ENCODE measurements at regions of chr1 and their contacts with region 1.

Region 1: DNA sequence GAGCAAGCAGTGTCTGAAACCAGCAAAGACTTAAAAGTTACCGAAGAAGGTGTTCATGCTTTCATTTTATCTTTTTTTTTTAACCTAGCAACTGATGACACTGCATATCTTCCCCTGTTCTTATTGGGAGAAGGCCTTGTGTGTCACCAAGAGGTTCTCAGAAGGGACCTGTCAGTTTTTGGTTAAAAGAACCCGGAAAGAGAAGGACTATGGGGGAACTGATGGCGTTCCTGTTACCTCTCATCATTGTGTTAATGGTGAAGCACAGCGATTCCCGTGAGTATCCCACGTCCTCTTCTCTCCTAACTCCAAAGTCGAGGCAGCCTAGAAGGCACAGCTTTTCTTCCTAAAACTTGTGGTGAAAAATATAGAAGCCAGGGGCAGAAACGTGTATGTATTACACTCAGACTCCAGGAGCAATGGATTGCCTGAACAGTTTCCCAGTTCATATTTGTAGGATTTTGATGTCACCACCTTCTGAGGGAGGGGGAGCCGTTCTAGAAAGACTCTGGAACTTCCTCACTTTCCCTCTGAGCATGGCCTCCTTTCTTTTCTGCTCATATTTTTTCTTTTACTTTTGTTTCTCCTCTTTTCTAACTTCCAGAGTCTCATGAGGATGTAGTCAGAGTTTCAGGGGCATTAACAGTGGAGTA is at the start of gene MR1:
- DNase-seq: peak; percentile 72 to 91 (median 87)
- H3K4me3 ChIP-seq: peak within 1 kb of the TSS; percentile 63 to 72
- H3K4me3 Mint-ChIP-seq: peak within 1 kb of the TSS; percentile 93 to 99 (median 98)
- H3K27ac ChIP-seq: peak within 1 kb of the TSS; percentile 92
- H3K27ac Mint-ChIP-seq: peak within 1 kb of the TSS; percentile 95 to 100 (median 99)
- H3K4me1 ChIP-seq: peaks cover 56% of the 10 kb centered on the region
- H3K4me1 Mint-ChIP-seq: peaks cover 47 to 64% (median 54%) of the 10 kb centered on the region in 4 donors
- H3K27me3 ChIP-seq: no peaks in the 10 kb centered on the region
- H3K27me3 Mint-ChIP-seq: no peaks in the 10 kb centered on the region
- total RNA-seq, gene MR1: 31.8 to 33.2 TPM

Region 2: GRCh38 chr1:180881806-180882509 is 152.0 kb before region 1 on chr1:
- CTCF ChIA-PET with region 1: no interaction called
- POLR2A ChIA-PET with region 1: no interaction called
- intact Hi-C with region 1: loop called (anchors 5 kb)
- DNase-seq: peak in 1 of 5 donors; percentile 4
- H3K4me3 ChIP-seq: no peak overlapping the region
- H3K4me3 Mint-ChIP-seq: no peak overlapping the region
- H3K27ac ChIP-seq: no peak overlapping the region
- H3K27ac Mint-ChIP-seq: no peak overlapping the region
- H3K4me1 ChIP-seq: no peaks in the 10 kb centered on the region
- H3K4me1 Mint-ChIP-seq: no peaks in the 10 kb centered on the region
- H3K27me3 ChIP-seq: no peaks in the 10 kb centered on the region
- H3K27me3 Mint-ChIP-seq: no peaks in the 10 kb centered on the region

Region 3: GRCh38 chr1:181062836-181063428 is 29.0 kb after region 1 on chr1:
- CTCF ChIA-PET with region 1: interaction called, 5 read pairs
- POLR2A ChIA-PET with region 1: interaction called, 15 read pairs
- intact Hi-C with region 1: no loop called
- DNase-seq: peak in 4 of 5 donors; percentile 13 to 27 (median 19)
- H3K4me3 ChIP-seq: peak overlapping the region in 1 of 2 donors; percentile 33
- H3K4me3 Mint-ChIP-seq: peak overlapping the region; percentile 70 to 91 (median 76)
- H3K27ac ChIP-seq: peak overlapping the region; percentile 39
- H3K27ac Mint-ChIP-seq: peak overlapping the region; percentile 27 to 95 (median 87)
- H3K4me1 ChIP-seq: peaks cover 19% of the 10 kb centered on the region
- H3K4me1 Mint-ChIP-seq: peaks cover 18 to 24% (median 21%) of the 10 kb centered on the region in 4 donors
- H3K27me3 ChIP-seq: no peaks in the 10 kb centered on the region
- H3K27me3 Mint-ChIP-seq: no peaks in the 10 kb centered on the region

Region 4: GRCh38 chr1:181152892-181153633 is 119.1 kb after region 1 on chr1:
- CTCF ChIA-PET with region 1: interaction called, 7 read pairs
- POLR2A ChIA-PET with region 1: interaction called, 25 read pairs
- intact Hi-C with region 1: no loop called
- DNase-seq: no peak
- H3K4me3 ChIP-seq: no peak overlapping the region
- H3K4me3 Mint-ChIP-seq: no peak overlapping the region
- H3K27ac ChIP-seq: no peak overlapping the region
- H3K27ac Mint-ChIP-seq: peak overlapping the region in 2 of 7 donors; percentile 23 to 62
- H3K4me1 ChIP-seq: peaks cover 56% of the 10 kb centered on the region
- H3K4me1 Mint-ChIP-seq: peaks cover 37 to 61% (median 49%) of the 10 kb centered on the region in 4 donors
- H3K27me3 ChIP-seq: no peaks in the 10 kb centered on the region
- H3K27me3 Mint-ChIP-seq: no peaks in the 10 kb centered on the region

Region 5: GRCh38 chr1:181166377-181167196 is 132.7 kb after region 1 on chr1:
- CTCF ChIA-PET with region 1: interaction called, 18 read pairs
- POLR2A ChIA-PET with region 1: interaction called, 14 read pairs
- intact Hi-C with region 1: loop called (anchors 1 kb)
- DNase-seq: peak; percentile 72 to 78 (median 76)
- H3K4me3 ChIP-seq: no peak overlapping the region
- H3K4me3 Mint-ChIP-seq: peak overlapping the region in 7 of 8 donors; percentile 41 to 84 (median 72)
- H3K27ac ChIP-seq: no peak overlapping the region
- H3K27ac Mint-ChIP-seq: peak overlapping the region; percentile 57 to 88 (median 76)
- H3K4me1 ChIP-seq: peaks cover 6% of the 10 kb centered on the region
- H3K4me1 Mint-ChIP-seq: peaks cover 5 to 8% (median 6%) of the 10 kb centered on the region in 4 donors
- H3K27me3 ChIP-seq: no peaks in the 10 kb centered on the region
- H3K27me3 Mint-ChIP-seq: no peaks in the 10 kb centered on the region